CD4-positive, alpha-beta T cell (primary cell): ENCODE measurements at regions of chr6 and their contacts with region 1.

Region 1: DNA sequence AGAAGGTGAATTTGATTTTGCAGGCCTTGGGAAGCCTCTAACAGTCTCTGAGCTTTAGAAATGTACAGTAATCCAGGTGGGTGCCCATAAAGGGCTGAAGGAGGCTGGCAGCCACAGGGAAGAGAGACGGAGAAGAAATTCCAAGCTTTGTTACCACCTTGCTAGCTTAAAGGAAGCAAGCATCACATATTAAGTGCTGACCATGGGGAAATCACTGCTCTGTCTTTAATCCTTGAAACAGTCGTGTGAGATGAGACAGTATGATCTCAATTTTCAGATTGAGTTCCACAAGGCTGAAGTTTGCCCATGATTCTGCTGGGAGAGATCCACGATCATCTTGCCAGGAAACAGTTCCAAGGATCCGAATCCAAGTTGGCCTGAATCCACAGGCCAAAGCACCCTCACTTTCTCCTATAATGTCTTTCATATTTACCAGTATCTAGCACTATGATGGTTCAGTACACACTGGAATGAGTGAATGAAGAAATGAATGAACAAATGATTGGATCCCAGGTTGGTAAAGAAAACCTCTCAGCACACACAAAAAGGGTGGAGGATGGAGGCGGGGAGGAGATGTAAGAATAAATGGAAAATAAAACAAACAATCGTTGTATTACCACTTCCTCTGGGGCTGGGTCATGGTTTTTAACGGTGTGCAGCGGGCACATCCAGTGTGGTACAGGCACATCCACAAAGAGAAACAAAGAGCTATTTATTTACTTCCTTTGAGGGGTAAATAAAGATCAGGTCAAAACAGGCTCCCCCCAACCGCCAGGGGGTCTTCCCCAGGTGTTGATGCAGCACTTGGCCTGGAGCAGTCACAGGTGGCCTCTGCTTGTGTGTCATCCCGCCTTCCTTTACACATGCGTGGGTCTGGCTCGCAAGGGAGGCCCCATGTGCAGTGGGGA is 28.2 kb upstream of the TAF8 start:
- DNase-seq: peak; percentile 31 to 87 (median 61)
- ATAC-seq: peak; percentile 85
- H3K4me3 ChIP-seq: peak overlapping the region; percentile 17
- H3K4me3 Mint-ChIP-seq: peak overlapping the region; percentile 78
- H3K27ac ChIP-seq: peak overlapping the region; percentile 48 to 78
- H3K27ac Mint-ChIP-seq: peak overlapping the region; percentile 94
- H3K4me1 ChIP-seq: peaks cover 87% of the 10 kb centered on the region
- H3K4me1 Mint-ChIP-seq: peaks cover 71% of the 10 kb centered on the region
- H3K27me3 ChIP-seq: no peaks in the 10 kb centered on the region
- H3K27me3 Mint-ChIP-seq: no peaks in the 10 kb centered on the region
- CTCF ChIP-seq: no peak

Region 2: GRCh38 chr6:40640599-40641227 is 1381.4 kb before region 1 on chr6:
- CTCF ChIA-PET with region 1: no interaction called
- POLR2A ChIA-PET with region 1: no interaction called
- intact Hi-C with region 1: no loop called
- DNase-seq: peak in 9 of 14 experiments; percentile 1 to 39 (median 17)
- ATAC-seq: peak; percentile 51
- H3K4me3 ChIP-seq: peak overlapping the region; percentile 15
- H3K4me3 Mint-ChIP-seq: peak overlapping the region; percentile 80
- H3K27ac ChIP-seq: no peak overlapping the region
- H3K27ac Mint-ChIP-seq: peak overlapping the region; percentile 79
- H3K4me1 ChIP-seq: peaks cover 18% of the 10 kb centered on the region
- H3K4me1 Mint-ChIP-seq: peaks cover 36% of the 10 kb centered on the region
- H3K27me3 ChIP-seq: no peaks in the 10 kb centered on the region
- H3K27me3 Mint-ChIP-seq: no peaks in the 10 kb centered on the region
- CTCF ChIP-seq: no peak

Region 3: DNA sequence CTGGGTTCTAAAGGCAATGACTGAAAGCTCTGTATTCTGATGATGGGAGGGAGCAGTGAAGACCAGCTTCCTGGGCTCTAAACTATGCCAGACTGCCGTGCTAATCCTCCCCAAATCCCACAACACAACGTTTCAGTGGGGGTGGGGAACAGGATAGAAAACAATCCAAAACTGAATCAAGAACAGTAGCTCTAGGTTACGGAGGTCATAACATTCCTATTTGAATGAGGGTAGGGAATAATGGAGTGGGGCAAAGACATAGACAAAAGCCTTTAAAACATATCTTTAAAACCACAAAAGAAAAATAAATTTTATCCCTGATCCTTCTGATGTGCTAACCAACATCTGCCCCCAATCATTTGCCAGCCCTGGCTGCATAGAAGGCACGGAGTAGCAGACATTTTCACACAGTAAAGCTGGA is 134.8 kb before region 1 on chr6:
- CTCF ChIA-PET with region 1: no interaction called
- POLR2A ChIA-PET with region 1: no interaction called
- intact Hi-C with region 1: no loop called
- DNase-seq: no peak
- ATAC-seq: no peak
- H3K4me3 ChIP-seq: no peak overlapping the region
- H3K4me3 Mint-ChIP-seq: no peak overlapping the region
- H3K27ac ChIP-seq: no peak overlapping the region
- H3K27ac Mint-ChIP-seq: no peak overlapping the region
- H3K4me1 ChIP-seq: no peaks in the 10 kb centered on the region
- H3K4me1 Mint-ChIP-seq: no peaks in the 10 kb centered on the region
- H3K27me3 ChIP-seq: no peaks in the 10 kb centered on the region
- H3K27me3 Mint-ChIP-seq: no peaks in the 10 kb centered on the region
- CTCF ChIP-seq: no peak

Region 4: GRCh38 chr6:41984623-41985022 is 37.5 kb before region 1 on chr6:
- CTCF ChIA-PET with region 1: interaction called, 3 read pairs
- POLR2A ChIA-PET with region 1: no interaction called
- intact Hi-C with region 1: loop called (anchors 5 kb)
- DNase-seq: no peak
- ATAC-seq: no peak
- H3K4me3 ChIP-seq: no peak overlapping the region
- H3K4me3 Mint-ChIP-seq: no peak overlapping the region
- H3K27ac ChIP-seq: no peak overlapping the region
- H3K27ac Mint-ChIP-seq: peak overlapping the region; percentile 60
- H3K4me1 ChIP-seq: peaks cover 32% of the 10 kb centered on the region
- H3K4me1 Mint-ChIP-seq: peaks cover 76% of the 10 kb centered on the region
- H3K27me3 ChIP-seq: no peaks in the 10 kb centered on the region
- H3K27me3 Mint-ChIP-seq: no peaks in the 10 kb centered on the region
- CTCF ChIP-seq: no peak

Region 5: DNA sequence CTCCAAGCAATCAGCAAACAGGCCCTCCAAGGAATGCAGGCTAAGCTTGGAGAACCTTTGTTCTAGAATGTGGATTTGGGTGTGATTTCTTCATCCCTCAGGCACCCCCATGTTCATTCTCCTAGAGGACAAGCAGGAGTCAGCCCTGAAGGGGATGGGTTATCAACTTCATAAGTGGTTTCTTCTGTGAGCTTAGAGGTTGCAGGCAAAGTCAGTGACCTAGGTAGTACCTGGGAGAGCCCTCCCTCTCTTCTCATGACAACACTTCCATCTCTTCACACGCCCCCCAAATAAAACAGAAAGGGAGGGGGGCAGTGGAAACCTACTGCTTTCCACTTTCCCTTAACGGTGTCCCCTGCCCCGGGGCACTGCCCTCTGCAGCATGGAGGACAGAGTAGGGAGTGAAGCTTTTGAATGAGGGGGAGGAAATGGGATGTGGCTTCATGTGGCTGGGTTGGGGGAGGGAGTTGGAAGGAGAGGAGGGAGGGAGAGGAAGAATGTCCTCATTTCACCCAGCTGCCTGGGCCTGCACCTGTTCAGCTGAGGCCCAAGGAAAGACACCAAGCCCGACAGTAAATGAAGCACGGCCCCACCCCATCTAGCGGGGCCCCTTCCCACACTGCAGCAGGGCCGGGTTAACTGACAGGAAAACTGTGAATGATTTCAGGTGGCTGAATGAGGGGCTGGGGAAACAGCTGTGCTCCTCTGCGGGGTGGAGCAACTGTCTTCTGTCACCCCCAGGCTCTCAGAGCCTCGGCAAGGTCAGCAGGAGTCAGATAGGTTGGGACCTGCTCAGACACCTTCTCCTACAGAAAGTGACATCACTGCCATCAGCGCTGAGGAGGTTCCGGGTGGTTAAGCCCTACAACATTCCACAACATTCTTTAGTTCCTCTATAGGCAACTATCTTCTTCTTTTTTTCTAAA is 11.9 kb before region 1 on chr6:
- CTCF ChIA-PET with region 1: no interaction called
- POLR2A ChIA-PET with region 1: interaction called, 6 read pairs
- intact Hi-C with region 1: loop called in 1 of 2 experiments (anchors 2 kb)
- DNase-seq: peak in 5 of 14 experiments; percentile 24 to 39 (median 30)
- ATAC-seq: peak; percentile 57
- H3K4me3 ChIP-seq: no peak overlapping the region
- H3K4me3 Mint-ChIP-seq: peak overlapping the region; percentile 56
- H3K27ac ChIP-seq: peak overlapping the region; percentile 48 to 59
- H3K27ac Mint-ChIP-seq: peak overlapping the region; percentile 92
- H3K4me1 ChIP-seq: peaks cover 74% of the 10 kb centered on the region
- H3K4me1 Mint-ChIP-seq: peaks cover 84% of the 10 kb centered on the region
- H3K27me3 ChIP-seq: no peaks in the 10 kb centered on the region
- H3K27me3 Mint-ChIP-seq: no peaks in the 10 kb centered on the region
- CTCF ChIP-seq: no peak

Region 6: DNA sequence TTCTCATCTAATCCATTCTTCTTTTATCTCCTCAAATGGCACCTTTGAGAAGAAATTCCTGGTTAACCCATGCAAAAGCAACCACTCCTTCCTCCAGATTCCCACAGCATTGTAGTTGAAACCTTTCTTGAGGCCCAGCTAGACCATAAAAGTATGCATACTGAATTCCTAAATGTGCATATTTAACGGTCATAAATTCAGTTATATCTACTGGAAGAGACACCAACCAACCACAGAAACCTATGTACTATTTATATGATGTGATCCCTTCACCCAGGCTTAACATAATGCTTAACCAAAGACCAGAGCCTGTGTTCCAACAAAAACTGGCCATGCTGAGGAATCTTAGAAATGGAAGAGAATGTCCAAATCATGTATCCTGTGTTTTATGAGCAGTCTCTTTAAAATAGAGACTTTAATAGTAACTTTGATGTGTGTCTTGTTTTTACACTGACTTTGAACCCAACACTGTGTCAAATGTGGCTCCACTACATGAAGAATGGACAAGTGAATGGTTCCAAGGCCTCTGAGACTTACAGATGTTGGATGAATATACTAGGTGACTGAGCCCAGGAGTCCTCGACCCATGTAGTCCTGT is 16.8 kb after region 1 on chr6:
- CTCF ChIA-PET with region 1: interaction called, 8 read pairs
- POLR2A ChIA-PET with region 1: interaction called, 43 read pairs
- intact Hi-C with region 1: loop called (anchors 2 kb)
- DNase-seq: no peak
- ATAC-seq: no peak
- H3K4me3 ChIP-seq: peak overlapping the region; percentile 49
- H3K4me3 Mint-ChIP-seq: peak overlapping the region; percentile 88
- H3K27ac ChIP-seq: peak overlapping the region; percentile 60 to 61
- H3K27ac Mint-ChIP-seq: peak overlapping the region; percentile 89
- H3K4me1 ChIP-seq: peaks cover 98% of the 10 kb centered on the region
- H3K4me1 Mint-ChIP-seq: peaks cover 75% of the 10 kb centered on the region
- H3K27me3 ChIP-seq: no peaks in the 10 kb centered on the region
- H3K27me3 Mint-ChIP-seq: no peaks in the 10 kb centered on the region
- CTCF ChIP-seq: no peak

Region 7: DNA sequence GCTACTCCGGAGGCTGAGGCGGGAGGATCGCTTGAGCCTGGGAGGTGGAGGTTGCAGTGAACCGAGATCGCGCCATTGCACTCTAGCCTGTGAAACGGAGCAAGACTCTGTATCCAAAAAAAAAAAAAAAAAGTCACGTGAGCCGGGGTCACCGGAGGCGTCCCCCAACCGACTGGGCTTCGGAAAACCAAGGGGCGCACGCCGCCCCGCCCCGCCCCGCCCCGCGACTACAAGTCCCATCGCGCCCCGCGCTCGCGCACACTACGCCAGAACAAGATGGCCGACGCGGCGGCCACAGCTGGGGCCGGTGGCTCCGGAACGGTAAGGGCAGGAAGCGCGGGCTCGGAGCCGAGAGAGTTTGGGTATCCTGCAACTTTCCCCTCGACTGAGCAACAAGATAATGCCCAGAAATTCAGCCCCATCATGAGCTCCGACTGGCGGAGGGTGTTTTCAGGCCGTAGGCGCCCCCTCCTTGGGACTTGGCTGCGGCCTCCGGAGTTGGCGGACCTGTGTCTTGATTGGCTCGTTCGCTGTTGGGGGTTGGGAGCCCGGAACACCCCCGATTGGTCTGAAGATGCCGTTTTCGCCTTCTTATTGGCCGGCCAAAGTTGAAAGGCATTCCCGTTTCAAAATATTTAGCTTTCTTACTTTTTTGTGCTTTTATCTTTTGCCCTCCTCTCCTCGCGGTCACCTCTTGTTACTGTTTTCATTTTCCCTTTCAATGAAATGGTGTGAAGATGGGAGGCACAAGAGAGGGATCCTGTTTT is 28.3 kb after region 1 on chr6 and contains the start of gene TAF8:
- CTCF ChIA-PET with region 1: interaction called, 8 read pairs
- POLR2A ChIA-PET with region 1: interaction called, 19 read pairs
- intact Hi-C with region 1: loop called in 1 of 2 experiments (anchors 2 kb)
- DNase-seq: peak; percentile 78 to 95 (median 84)
- ATAC-seq: peak; percentile 53
- H3K4me3 ChIP-seq: peak within 1 kb of the TSS; percentile 85
- H3K4me3 Mint-ChIP-seq: peak within 1 kb of the TSS; percentile 96
- H3K27ac ChIP-seq: peak within 1 kb of the TSS; percentile 85 to 89
- H3K27ac Mint-ChIP-seq: peak within 1 kb of the TSS; percentile 89
- H3K4me1 ChIP-seq: peaks cover 61% of the 10 kb centered on the region
- H3K4me1 Mint-ChIP-seq: peaks cover 72% of the 10 kb centered on the region
- H3K27me3 ChIP-seq: no peaks in the 10 kb centered on the region
- H3K27me3 Mint-ChIP-seq: no peaks in the 10 kb centered on the region
- CTCF ChIP-seq: no peak
- total RNA-seq, gene TAF8: 30.1 to 34.7 TPM